ENCODE measurements at regions of chr7 and their contacts with region 1.

Region 1: GRCh38 chr7:6175645-6176044 is 96.8 kb downstream of the CYTH3 start:
- DNase-seq: no peak
- H3K4me3 ChIP-seq: no peak overlapping the region
- H3K27ac ChIP-seq: no peak overlapping the region
- H3K27me3 ChIP-seq: no peaks in the 10 kb centered on the region
- CTCF ChIP-seq: no peak

Region 2: GRCh38 chr7:6317797-6318438 is 142.3 kb after region 1 on chr7:
- CTCF ChIA-PET with region 1: interaction called, 12 read pairs
- POLR2A ChIA-PET with region 1: no interaction called
- DNase-seq: no peak
- H3K4me3 ChIP-seq: no peak overlapping the region
- H3K27ac ChIP-seq: peak overlapping the region; percentile 31
- H3K27me3 ChIP-seq: no peaks in the 10 kb centered on the region
- CTCF ChIP-seq: no peak